WTC11 (cell line): ENCODE measurements at regions of chr2 and their contacts with region 1.

Region 1: GRCh38 chr2:131492418-131493198 is 411 bp upstream of the MZT2A start:
- DNase-seq: peak; percentile 94
- ATAC-seq: peak; percentile 78
- H3K4me3 Mint-ChIP-seq: peak overlapping the region; percentile 96
- H3K27ac Mint-ChIP-seq: peak overlapping the region; percentile 85; the same call in 1 of the 2 replicates
- H3K4me1 Mint-ChIP-seq: peaks cover 15% of the 10 kb centered on the region
- H3K27me3 Mint-ChIP-seq: no peaks in the 10 kb centered on the region
- CTCF ChIP-seq: peak; percentile 75

Region 2: GRCh38 chr2:131413148-131413747 is 79.4 kb before region 1 on chr2:
- CTCF ChIA-PET with region 1: interaction called, 14 read pairs
- POLR2A ChIA-PET with region 1: interaction called, 3 read pairs
- DNase-seq: no peak
- ATAC-seq: peak; percentile 66
- H3K4me3 Mint-ChIP-seq: no peak overlapping the region
- H3K27ac Mint-ChIP-seq: no peak overlapping the region
- H3K4me1 Mint-ChIP-seq: no peaks in the 10 kb centered on the region; the same call in 1 of the 2 replicates
- H3K27me3 Mint-ChIP-seq: no peaks in the 10 kb centered on the region
- CTCF ChIP-seq: peak; percentile 59